Mammary epithelial cell (primary cell): ENCODE measurements at regions of chr11 and their contacts with region 1.

Region 1: DNA sequence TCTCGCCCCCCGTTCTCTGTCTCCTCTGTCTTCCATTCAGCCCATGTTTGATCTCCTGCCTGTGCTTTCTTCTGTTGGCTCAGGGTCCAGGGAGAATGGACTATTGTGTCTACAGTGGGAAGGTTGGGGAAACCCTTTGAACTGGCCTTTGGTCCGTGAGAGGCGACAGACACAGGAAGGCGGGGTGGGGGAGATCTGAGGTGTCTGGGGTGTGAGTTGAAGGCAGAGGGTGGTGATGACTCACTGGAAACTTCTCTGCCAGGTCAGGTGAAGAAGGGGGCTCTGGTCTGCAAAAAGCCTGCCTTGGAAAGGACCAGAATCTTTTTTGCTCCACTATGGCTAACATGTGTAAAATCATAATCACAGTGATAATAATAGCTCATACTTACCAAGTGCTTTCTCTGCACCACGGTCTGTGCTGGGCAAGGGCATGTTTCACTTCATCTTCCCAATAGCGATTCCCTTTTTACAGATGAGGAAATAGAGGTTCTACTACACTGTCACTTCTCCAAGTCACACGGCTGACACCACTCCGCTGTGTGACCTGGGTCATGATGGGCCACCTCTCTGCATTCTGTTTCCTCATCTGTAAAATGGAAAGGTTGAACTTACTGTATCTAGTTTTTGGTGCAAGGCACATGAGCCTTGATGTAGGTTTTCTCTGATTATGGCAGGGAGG is 99.8 kb upstream of the ALX4 start:
- DNase-seq: no peak
- H3K4me3 ChIP-seq: no peak overlapping the region
- H3K27ac ChIP-seq: no peak overlapping the region
- H3K4me1 ChIP-seq: no peaks in the 10 kb centered on the region
- H3K27me3 ChIP-seq: peaks cover 3% of the 10 kb centered on the region
- CTCF ChIP-seq: no peak

Region 2: GRCh38 chr11:44498089-44498871 is 88.6 kb after region 1 on chr11:
- CTCF ChIA-PET with region 1: no interaction called
- dilution Hi-C with region 1: loop called (anchors 5 kb)
- in situ Hi-C with region 1: no loop called
- intact Hi-C with region 1: no loop called
- DNase-seq: no peak
- H3K4me3 ChIP-seq: no peak overlapping the region
- H3K27ac ChIP-seq: no peak overlapping the region
- H3K4me1 ChIP-seq: no peaks in the 10 kb centered on the region
- H3K27me3 ChIP-seq: peaks cover 5% of the 10 kb centered on the region
- CTCF ChIP-seq: no peak

Region 3: DNA sequence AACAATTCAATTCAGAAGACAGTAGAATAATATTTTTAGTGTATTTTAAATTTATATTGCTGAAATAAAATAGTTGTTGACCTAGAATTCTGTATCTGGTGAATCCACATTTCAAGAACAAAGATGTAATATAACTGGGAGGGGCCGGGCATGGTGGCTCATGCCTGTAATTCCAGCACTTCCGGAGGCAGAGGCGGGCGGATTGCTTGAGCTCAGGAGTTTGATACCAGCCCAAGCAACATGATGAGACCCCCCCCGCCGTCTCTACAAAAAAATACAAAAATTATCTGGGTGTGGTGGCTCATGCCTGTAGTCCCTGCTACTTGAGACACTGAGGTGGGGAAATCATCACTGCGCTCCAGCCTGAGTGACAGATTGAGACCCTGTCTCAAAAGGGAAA is 228.3 kb after region 1 on chr11:
- CTCF ChIA-PET with region 1: no interaction called
- dilution Hi-C with region 1: no loop called
- in situ Hi-C with region 1: no loop called
- intact Hi-C with region 1: no loop called
- DNase-seq: peak; percentile 20
- H3K4me3 ChIP-seq: no peak overlapping the region
- H3K27ac ChIP-seq: no peak overlapping the region
- H3K4me1 ChIP-seq: peaks cover 16% of the 10 kb centered on the region
- H3K27me3 ChIP-seq: no peaks in the 10 kb centered on the region
- CTCF ChIP-seq: no peak